ENCODE measurements at regions of chrX and their contacts with region 1.

Region 1: GRCh38 chrX:45557390-45557789 is 356.7 kb upstream of the DIPK2B start:
- DNase-seq: peak; percentile 1
- ATAC-seq: no peak
- H3K4me3 ChIP-seq: no peak overlapping the region
- H3K27ac ChIP-seq: no peak overlapping the region
- H3K4me1 ChIP-seq: no peaks in the 10 kb centered on the region
- H3K27me3 ChIP-seq: no peaks in the 10 kb centered on the region
- CTCF ChIP-seq: no peak
- POLR2A ChIP-seq: no peak
- RAD21 ChIP-seq: 0 out of 2 replicates have a peak, but pooled peaks have one; percentile 18

Region 2: DNA sequence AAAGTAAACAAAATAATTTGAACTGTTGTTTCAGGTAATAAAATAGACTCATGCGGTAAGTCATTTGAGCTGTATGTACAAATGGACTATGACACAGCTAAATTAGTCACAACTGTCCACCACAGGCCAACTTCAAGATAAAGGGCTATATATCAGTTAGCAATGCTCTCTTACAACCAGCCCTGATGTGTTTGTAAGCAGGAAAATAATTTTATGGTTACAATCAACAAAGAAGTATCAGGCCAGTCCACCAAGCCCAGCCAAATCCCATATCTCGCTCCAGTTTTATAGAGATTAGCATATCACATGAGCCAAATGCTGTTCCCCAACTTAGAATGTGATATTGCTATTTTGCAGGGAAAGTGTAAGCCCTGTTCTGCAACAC is 714.1 kb before region 1 on chrX:
- CTCF ChIA-PET with region 1: no interaction called
- POLR2A ChIA-PET with region 1: no interaction called
- dilution Hi-C with region 1: no loop called
- in situ Hi-C with region 1: no loop called
- intact Hi-C with region 1: no loop called
- DNase-seq: no peak
- ATAC-seq: no peak
- H3K4me3 ChIP-seq: no peak overlapping the region
- H3K27ac ChIP-seq: no peak overlapping the region
- H3K4me1 ChIP-seq: no peaks in the 10 kb centered on the region
- H3K27me3 ChIP-seq: no peaks in the 10 kb centered on the region; the same call in 1 of the 2 replicates
- CTCF ChIP-seq: no peak
- POLR2A ChIP-seq: no peak
- RAD21 ChIP-seq: no peak

Region 3: DNA sequence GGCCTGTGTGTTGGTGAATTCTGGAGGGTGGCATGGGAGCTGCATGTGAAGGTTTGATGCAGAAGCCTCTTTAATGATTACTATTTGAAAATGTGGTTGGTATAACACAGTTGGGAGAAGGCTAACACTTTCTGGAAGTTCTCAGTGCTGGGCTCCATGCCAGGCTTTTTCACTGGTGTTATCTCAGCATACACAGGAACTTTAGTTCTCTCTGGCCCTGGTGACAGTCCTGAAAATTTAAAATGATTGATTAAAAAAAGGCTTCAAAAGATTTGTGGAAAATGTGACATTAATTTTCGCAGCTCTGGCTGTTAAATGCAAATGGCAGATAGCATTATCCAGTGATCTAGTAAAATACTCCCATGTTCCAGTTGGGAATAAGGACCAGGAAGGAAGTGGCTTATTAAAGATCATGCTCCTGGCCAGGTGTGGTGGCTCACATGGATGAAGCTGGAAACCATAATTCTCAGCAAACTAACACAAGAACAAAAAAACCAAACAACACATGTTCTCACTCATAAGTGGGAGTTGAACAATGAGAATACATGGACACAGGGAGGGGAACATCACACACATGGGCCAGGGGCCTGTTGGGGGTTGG is 393.3 kb before region 1 on chrX:
- CTCF ChIA-PET with region 1: no interaction called
- POLR2A ChIA-PET with region 1: no interaction called
- dilution Hi-C with region 1: no loop called
- in situ Hi-C with region 1: no loop called
- intact Hi-C with region 1: no loop called
- DNase-seq: no peak
- ATAC-seq: no peak
- H3K4me3 ChIP-seq: no peak overlapping the region
- H3K27ac ChIP-seq: no peak overlapping the region
- H3K4me1 ChIP-seq: no peaks in the 10 kb centered on the region
- H3K27me3 ChIP-seq: peaks cover 32% of the 10 kb centered on the region
- CTCF ChIP-seq: no peak
- POLR2A ChIP-seq: no peak
- RAD21 ChIP-seq: no peak

Region 4: GRCh38 chrX:45479835-45480422 is 77.5 kb before region 1 on chrX:
- CTCF ChIA-PET with region 1: no interaction called
- POLR2A ChIA-PET with region 1: no interaction called
- dilution Hi-C with region 1: no loop called
- in situ Hi-C with region 1: no loop called
- intact Hi-C with region 1: loop called (anchors 2 kb)
- DNase-seq: peak; percentile 91
- ATAC-seq: peak; percentile 78
- H3K4me3 ChIP-seq: no peak overlapping the region
- H3K27ac ChIP-seq: peak overlapping the region; percentile 89
- H3K4me1 ChIP-seq: peaks cover 4% of the 10 kb centered on the region; the same call in 1 of the 2 replicates
- H3K27me3 ChIP-seq: no peaks in the 10 kb centered on the region; the same call in 1 of the 2 replicates
- CTCF ChIP-seq: no peak
- POLR2A ChIP-seq: no peak
- RAD21 ChIP-seq: no peak

Region 5: DNA sequence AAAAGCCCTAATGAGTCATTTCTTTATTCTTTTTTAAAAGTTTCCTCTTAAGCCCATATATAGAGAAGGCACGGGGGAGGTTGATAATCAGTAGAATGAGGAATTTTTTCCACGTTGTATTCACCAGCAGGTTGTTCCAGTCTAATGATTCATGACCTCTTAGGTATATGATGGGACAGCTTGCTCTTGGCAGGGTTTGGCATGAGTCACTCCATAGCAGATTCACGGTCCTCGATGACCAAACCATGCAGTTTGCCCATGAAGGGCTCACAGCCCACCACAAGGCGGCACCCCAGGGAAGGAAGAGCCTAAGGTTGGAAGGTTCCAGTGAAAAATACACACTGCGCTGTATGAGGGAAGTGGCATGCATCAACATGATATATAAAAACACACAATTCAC is 267.1 kb after region 1 on chrX:
- CTCF ChIA-PET with region 1: no interaction called
- POLR2A ChIA-PET with region 1: no interaction called
- dilution Hi-C with region 1: no loop called
- in situ Hi-C with region 1: no loop called
- intact Hi-C with region 1: no loop called
- DNase-seq: peak; percentile 96
- ATAC-seq: peak; percentile 92
- H3K4me3 ChIP-seq: no peak overlapping the region
- H3K27ac ChIP-seq: no peak overlapping the region
- H3K4me1 ChIP-seq: no peaks in the 10 kb centered on the region
- H3K27me3 ChIP-seq: peaks cover 2% of the 10 kb centered on the region; the same call in 1 of the 2 replicates
- CTCF ChIP-seq: peak; percentile 81
- POLR2A ChIP-seq: no peak
- RAD21 ChIP-seq: peak; percentile 81